ENCODE measurements at regions of chr6 and their contacts with region 1.

Region 1: GRCh38 chr6:122730775-122731386 is 48.6 kb upstream of the FABP7 start:
- DNase-seq: no peak
- H3K4me3 ChIP-seq: no peak overlapping the region
- H3K27ac ChIP-seq: no peak overlapping the region
- H3K4me1 ChIP-seq: no peaks in the 10 kb centered on the region
- H3K27me3 ChIP-seq: no peaks in the 10 kb centered on the region
- CTCF ChIP-seq: peak; percentile 35 to 75 (median 57)
- EP300 ChIP-seq: no peak
- POLR2A ChIP-seq: no peak

Region 2: GRCh38 chr6:122389704-122390372 is 341.0 kb before region 1 on chr6:
- intact Hi-C with region 1: no loop called
- DNase-seq: no peak
- H3K4me3 ChIP-seq: no peak overlapping the region
- H3K27ac ChIP-seq: no peak overlapping the region
- H3K4me1 ChIP-seq: no peaks in the 10 kb centered on the region
- H3K27me3 ChIP-seq: no peaks in the 10 kb centered on the region
- CTCF ChIP-seq: no peak
- EP300 ChIP-seq: no peak
- POLR2A ChIP-seq: no peak

Region 3: DNA sequence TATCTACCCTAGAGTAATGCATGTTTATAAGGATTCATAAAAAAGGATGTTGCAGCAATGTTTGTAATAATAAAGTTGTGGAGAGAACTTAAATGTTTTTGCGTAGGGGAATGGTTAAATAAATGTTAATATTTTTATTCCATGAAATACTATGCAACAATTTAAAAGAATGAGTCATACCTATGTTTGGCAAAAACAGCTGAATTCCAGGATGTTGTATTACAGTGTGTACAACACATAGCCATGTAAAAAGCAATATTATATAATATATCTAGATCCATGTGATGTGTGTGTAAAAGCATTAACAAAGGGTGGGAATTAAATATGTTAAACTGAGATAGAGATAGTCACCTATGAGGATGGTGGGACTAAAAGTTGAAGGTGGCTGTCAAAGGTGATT is 141.8 kb before region 1 on chr6:
- intact Hi-C with region 1: no loop called
- DNase-seq: no peak
- H3K4me3 ChIP-seq: no peak overlapping the region
- H3K27ac ChIP-seq: no peak overlapping the region
- H3K4me1 ChIP-seq: no peaks in the 10 kb centered on the region
- H3K27me3 ChIP-seq: no peaks in the 10 kb centered on the region
- CTCF ChIP-seq: no peak
- EP300 ChIP-seq: no peak
- POLR2A ChIP-seq: no peak

Region 4: DNA sequence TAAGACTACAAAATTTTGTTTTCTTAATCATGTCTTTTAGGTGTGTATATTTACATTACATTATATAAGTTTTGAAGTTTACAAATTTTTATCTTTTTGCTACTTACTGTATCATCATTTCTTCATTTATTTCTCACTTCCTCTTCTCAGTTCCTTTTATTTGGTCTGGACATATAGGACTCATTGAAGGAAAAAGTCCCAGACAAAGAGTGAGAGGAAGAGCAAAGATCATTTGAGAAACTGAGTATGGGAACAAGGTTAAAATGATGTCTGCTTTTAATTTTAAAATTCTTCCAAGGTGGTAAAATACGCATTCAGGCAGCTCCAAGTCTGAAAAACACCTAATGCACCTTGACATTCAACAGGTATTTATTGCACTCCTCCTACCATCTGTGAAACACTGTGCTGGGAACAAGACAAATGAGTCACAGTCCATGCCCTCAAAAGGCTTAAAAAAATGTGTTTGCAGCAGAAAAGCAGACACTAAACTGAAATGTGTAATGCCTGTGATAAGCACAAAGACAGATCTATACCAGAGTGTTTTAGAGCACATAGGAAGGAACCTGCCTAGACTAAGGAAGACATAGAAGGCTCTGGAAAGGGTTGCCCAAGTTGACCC is 57.4 kb before region 1 on chr6:
- intact Hi-C with region 1: no loop called
- DNase-seq: no peak
- H3K4me3 ChIP-seq: no peak overlapping the region
- H3K27ac ChIP-seq: no peak overlapping the region
- H3K4me1 ChIP-seq: no peaks in the 10 kb centered on the region
- H3K27me3 ChIP-seq: no peaks in the 10 kb centered on the region
- CTCF ChIP-seq: no peak
- EP300 ChIP-seq: no peak
- POLR2A ChIP-seq: no peak

Region 5: GRCh38 chr6:122702841-122703240 is 28.0 kb before region 1 on chr6:
- intact Hi-C with region 1: no loop called
- DNase-seq: no peak
- H3K4me3 ChIP-seq: no peak overlapping the region
- H3K27ac ChIP-seq: no peak overlapping the region
- H3K4me1 ChIP-seq: no peaks in the 10 kb centered on the region
- H3K27me3 ChIP-seq: no peaks in the 10 kb centered on the region
- CTCF ChIP-seq: no peak
- EP300 ChIP-seq: no peak
- POLR2A ChIP-seq: no peak

Region 6: GRCh38 chr6:122839477-122839876 is 108.6 kb after region 1 on chr6:
- intact Hi-C with region 1: loop called (anchors 5 to 10 kb)
- DNase-seq: peak; percentile 16 to 54 (median 27)
- H3K4me3 ChIP-seq: no peak overlapping the region
- H3K27ac ChIP-seq: no peak overlapping the region
- H3K4me1 ChIP-seq: no peaks in the 10 kb centered on the region
- H3K27me3 ChIP-seq: no peaks in the 10 kb centered on the region
- CTCF ChIP-seq: peak; percentile 26 to 45 (median 32)
- EP300 ChIP-seq: no peak
- POLR2A ChIP-seq: no peak

Region 7: DNA sequence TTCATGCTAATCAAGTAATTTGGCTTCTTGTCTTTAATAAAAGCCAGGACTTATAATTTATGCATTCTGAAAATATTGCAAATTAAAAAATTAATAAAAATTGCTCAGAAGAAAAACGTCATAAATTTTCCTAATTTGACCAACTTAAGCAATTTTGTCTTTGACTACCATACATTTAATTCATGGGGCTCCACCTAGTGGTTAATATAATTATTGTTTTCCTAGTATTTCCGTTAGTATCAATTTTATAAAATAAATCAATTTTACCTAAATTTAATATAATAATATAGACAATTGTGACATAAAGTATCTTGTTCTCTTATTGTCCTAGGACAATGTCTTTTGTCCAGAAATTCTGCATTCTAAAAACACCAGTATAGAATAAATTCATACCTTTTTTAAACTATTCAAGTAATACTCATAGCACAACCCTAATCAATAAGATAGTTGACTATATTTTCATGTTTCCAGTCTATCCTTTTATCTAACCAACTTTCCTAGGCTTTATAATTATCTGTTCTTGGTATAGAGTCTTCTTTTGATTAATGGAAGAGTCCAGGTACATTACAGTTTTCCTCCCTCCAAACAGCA is 585.9 kb after region 1 on chr6:
- intact Hi-C with region 1: loop called in 2 of 4 experiments (anchors 5 to 10 kb)
- DNase-seq: no peak
- H3K4me3 ChIP-seq: no peak overlapping the region
- H3K27ac ChIP-seq: no peak overlapping the region
- H3K4me1 ChIP-seq: no peaks in the 10 kb centered on the region
- H3K27me3 ChIP-seq: no peaks in the 10 kb centered on the region
- CTCF ChIP-seq: no peak
- EP300 ChIP-seq: no peak
- POLR2A ChIP-seq: no peak

Measured in ovary (tissue), 10 donors.